ENCODE measurements at regions of chr15 and their contacts with region 1.

Region 1: GRCh38 chr15:92625251-92625980 is 30.2 kb downstream of the FAM174B start:
- DNase-seq: peak; percentile 46
- H3K4me3 Mint-ChIP-seq: peak overlapping the region; percentile 3
- H3K27ac Mint-ChIP-seq: peak overlapping the region; percentile 93
- H3K4me1 Mint-ChIP-seq: peaks cover 39% of the 10 kb centered on the region
- H3K27me3 Mint-ChIP-seq: peaks cover 8% of the 10 kb centered on the region

Region 2: DNA sequence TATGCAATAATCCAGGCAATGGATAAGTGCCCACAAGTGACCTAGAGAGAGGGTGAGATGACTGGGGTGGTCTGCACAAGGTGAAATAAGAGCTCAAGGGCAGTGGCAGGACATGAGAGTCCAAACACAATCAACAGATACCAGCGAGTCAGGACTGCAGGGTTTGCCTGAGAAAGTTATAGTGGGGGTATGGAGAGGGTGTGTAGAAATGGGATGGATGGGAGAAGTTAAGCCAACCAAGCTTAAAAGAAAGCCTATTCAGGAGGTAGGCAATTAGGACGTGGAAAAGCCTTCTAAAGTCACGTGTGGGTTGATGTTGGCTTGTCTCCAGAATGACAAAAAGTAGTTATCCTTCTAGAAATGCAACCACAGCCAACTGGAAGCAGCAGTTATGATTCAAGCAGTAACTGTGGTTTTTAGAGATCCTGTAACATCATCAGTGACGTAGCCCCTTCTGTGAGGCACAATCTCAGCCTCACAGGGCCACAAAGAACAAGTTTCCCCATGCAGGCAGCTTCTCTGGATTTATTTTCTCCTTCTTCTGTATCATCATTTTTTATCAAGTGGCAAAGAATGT is 25.9 kb before region 1 on chr15:
- CTCF ChIA-PET with region 1: no interaction called
- POLR2A ChIA-PET with region 1: no interaction called
- intact Hi-C with region 1: loop called (anchors 1 kb)
- DNase-seq: peak; percentile 18
- H3K4me3 Mint-ChIP-seq: no peak overlapping the region
- H3K27ac Mint-ChIP-seq: no peak overlapping the region
- H3K4me1 Mint-ChIP-seq: peaks cover 8% of the 10 kb centered on the region
- H3K27me3 Mint-ChIP-seq: peaks cover 22% of the 10 kb centered on the region

Region 3: DNA sequence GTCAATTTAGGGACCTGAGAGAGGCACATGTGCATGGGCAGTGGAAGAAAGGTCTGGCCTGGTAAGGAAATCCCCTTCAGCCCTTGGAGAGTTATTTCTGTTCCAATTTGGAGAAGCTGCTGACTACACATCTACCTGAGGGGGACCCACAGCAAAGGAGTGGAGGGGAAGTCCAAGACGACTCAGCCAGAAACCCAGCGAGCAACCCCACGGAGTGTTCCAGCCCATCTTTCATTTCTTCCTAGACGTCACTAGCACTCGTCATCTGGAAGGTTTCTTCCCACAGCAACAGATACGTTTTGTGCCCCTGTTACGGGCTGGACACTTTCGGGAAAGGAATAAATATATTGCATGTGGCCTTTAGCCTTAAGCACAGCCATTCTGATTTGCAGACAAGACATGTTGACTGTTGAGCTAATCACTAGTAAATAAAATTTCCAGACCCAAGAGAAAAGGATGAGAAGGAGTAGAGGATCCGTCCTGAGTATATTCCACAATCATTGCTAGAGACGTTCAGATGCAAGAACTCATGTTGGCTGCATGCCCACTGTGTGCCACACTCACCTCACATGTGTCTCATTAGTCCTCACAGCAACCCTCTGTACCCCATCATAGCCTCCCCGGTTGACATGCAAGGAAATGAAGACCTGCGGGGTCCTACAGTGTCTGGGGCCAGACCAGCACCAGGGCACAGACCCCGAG is 38.0 kb after region 1 on chr15:
- CTCF ChIA-PET with region 1: no interaction called
- POLR2A ChIA-PET with region 1: interaction called, 4 read pairs
- intact Hi-C with region 1: loop called (anchors 1 kb)
- DNase-seq: peak; percentile 73
- H3K4me3 Mint-ChIP-seq: no peak overlapping the region
- H3K27ac Mint-ChIP-seq: no peak overlapping the region
- H3K4me1 Mint-ChIP-seq: peaks cover 29% of the 10 kb centered on the region
- H3K27me3 Mint-ChIP-seq: peaks cover 7% of the 10 kb centered on the region

Region 4: GRCh38 chr15:92803847-92804609 is 178.6 kb after region 1 on chr15:
- CTCF ChIA-PET with region 1: no interaction called
- POLR2A ChIA-PET with region 1: no interaction called
- intact Hi-C with region 1: loop called (anchors 1 kb)
- DNase-seq: peak; percentile 94
- H3K4me3 Mint-ChIP-seq: peak overlapping the region; percentile 10
- H3K27ac Mint-ChIP-seq: peak overlapping the region; percentile 88
- H3K4me1 Mint-ChIP-seq: peaks cover 36% of the 10 kb centered on the region
- H3K27me3 Mint-ChIP-seq: no peaks in the 10 kb centered on the region

Region 5: DNA sequence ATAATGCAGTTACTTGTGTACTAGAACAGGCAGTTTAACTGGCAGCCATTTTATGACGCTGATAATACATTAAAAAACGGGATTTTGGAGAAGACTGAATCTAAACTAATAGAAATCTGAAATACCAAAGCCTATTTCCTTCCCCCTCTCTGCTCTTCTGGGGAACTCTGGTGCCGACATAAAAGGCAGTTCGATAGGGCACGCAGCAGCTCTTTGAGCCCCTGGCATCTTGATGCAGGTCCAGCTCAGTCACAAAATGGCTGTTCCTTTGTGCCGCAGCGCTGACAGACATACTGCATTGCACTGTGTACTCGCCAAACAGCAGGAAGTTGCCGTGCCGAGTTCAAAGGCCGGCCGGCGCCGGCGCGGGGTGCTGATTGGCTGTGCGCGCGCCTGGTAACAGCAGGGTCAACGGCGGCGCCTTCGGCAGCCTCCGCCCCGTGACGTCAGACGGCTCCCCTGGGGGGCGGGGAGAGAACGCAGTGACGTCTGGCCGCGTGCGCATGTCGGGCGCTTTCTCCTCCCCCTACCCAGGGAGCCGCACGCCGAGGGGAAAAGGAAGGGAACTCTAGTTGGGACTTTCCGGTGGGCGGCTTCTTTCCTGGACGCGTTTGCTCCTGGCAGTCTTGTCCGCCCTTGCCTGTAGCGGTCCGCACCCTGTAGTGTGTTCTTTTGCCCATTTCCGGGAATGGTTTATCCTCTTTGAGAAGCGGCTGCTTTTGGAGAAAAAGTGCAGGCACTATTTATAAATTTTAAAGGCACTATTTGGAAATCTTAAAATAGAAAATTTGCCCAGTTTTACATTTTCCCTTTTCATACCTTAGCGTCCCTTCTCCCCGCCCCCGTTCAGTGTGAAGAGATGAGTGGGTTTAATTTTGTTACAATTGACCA is 278.8 kb after region 1 on chr15:
- CTCF ChIA-PET with region 1: no interaction called
- POLR2A ChIA-PET with region 1: no interaction called
- intact Hi-C with region 1: loop called (anchors 5 kb)
- DNase-seq: peak; percentile 100
- H3K4me3 Mint-ChIP-seq: peak overlapping the region; percentile 97
- H3K27ac Mint-ChIP-seq: peak overlapping the region; percentile 100
- H3K4me1 Mint-ChIP-seq: peaks cover 55% of the 10 kb centered on the region
- H3K27me3 Mint-ChIP-seq: peaks cover 3% of the 10 kb centered on the region

Measured in activated CD4-positive, alpha-beta memory T cell treated with anti-CD3 and anti-CD28 coated beads for 36 hours (primary cell).